ENCODE measurements at regions of chr6 and their contacts with region 1.

Region 1: DNA sequence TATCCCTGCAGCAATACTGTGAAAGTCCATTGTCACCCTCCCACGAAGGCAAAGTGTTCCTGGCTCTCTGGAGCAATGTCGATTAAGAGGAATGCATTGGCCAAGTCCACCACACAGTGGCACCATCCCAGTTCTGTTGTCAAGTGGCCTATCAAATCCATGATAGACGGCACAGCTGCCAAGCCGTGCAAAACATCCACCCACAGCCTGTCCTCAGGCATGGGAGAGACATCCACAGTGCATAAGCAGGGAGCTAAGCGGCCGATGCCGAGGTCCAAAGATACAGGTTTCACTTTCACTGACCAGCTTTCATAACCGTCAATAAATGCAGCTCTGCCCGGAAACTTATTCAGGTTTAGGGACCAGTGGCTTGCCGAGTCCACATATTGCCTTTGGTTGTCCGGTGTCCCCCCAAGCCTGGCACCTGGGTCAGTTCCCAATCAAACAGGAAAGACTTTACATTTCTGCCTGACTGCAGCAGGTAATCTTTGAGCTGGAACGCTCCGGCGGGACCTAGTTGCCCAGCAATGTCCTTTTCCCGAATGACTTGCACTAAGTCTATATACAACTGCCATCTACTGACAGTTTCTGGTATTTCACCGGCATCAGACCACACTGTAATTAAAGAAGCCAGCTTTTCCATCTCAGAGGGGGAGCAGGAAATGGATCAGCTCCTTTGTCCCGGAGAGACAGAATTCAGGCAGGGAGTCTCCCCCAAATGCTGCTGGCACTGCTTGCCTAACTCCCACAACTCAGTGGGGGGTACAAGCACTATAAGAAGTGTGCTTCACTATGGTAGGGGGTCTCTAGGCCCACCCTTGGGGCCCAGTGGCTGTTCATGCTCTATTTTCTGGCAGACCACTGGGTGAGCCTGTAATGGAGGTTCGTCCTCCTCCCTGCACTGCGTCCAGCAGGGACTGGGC is 6.3 kb downstream of the ZKSCAN3 start:
- DNase-seq: peak; percentile 93
- H3K4me3 ChIP-seq: peak overlapping the region; percentile 52 to 84 (median 55)
- H3K27ac ChIP-seq: peak overlapping the region; percentile 60
- H3K4me1 ChIP-seq: peaks cover 36% of the 10 kb centered on the region
- H3K27me3 ChIP-seq: no peaks in the 10 kb centered on the region
- CTCF ChIP-seq: peak; percentile 66 to 73
- POLR2A ChIP-seq: peak; percentile 40

Region 2: DNA sequence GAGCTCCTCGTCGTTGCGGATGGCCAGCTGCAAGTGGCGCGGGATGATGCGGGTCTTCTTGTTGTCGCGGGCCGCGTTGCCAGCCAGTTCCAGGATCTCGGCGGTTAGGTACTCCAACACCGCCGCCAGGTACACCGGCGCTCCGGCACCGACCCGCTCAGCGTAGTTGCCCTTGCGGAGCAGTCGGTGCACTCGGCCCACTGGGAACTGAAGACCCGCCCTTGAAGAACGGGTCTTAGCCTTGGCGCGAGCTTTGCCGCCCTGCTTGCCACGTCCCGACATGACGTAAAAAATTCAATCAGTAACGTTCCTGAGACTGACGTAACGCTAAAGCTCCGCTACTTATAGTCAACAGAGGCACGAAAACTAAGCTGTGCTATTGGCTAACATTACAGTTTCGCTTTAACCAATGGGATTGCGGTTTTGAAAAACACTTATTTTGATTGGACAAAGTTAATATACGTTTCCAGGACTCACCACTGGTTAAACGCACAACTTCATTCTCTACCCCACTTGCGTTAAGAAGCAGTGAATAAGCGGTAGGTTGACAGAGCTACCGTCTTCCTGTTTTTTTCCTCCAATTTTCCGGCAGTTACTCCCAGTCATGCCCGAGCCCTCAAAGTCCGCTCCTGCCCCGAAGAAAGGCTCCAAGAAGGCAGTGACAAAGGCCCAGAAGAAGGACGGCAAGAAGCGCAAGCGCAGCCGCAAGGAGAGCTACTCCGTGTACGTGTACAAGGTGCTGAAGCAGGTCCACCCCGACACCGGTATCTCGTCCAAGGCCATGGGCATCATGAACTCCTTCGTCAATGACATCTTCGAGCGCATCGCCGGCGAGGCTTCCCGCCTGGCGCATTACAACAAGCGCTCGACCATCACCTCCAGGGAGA is 517.7 kb before region 1 on chr6:
- CTCF ChIA-PET with region 1: interaction called, 4 read pairs
- POLR2A ChIA-PET with region 1: no interaction called
- dilution Hi-C with region 1: no loop called
- intact Hi-C with region 1: loop called (anchors 2 kb)
- DNase-seq: peak; percentile 100
- H3K4me3 ChIP-seq: peak overlapping the region; percentile 25 to 86 (median 59)
- H3K27ac ChIP-seq: peak overlapping the region; percentile 95
- H3K4me1 ChIP-seq: peaks cover 14% of the 10 kb centered on the region
- H3K27me3 ChIP-seq: no peaks in the 10 kb centered on the region
- CTCF ChIP-seq: no peak
- POLR2A ChIP-seq: peak; percentile 87

Region 3: DNA sequence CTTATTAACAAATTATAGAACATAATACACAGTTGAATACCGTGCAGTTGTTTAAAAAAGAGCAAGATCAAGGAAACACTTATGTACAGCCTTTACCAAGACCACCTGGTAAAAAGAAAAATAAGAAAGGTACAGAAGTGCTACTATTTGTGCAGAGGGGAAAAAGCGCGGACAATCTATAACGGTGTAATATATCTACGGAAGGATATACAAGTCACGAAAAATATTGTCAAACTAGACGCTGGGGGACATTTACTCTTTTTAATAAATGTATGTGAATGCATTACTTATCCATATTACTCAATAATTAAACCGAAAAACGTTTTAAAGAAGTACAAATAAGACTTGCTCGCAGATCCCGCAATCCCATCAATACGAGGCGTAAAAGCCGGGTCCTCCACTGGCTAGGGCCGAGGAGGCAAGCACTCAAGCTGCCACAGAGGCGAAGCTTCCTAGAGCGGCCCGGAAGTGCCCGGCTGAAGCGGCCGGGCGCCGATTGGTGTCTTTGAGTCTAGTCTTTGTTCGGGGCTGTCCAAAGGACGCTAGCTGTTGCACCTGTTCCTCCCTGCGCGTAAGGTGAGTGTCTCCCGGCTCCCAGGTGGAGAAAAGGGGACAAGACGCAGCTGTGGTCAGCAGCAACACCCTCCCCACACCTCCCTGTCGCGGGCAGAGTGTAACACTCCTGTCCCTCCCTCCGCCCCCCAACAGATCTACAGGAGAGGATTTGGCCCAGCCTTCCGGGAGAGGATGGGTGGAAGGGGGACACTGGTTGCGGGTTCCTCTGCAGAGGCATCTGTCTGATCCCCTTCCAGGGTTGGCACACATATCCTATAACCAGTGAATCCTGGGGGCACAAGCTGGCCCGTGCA is 231.7 kb before region 1 on chr6 and contains the start of gene ZSCAN16:
- CTCF ChIA-PET with region 1: interaction called, 13 read pairs
- POLR2A ChIA-PET with region 1: no interaction called
- dilution Hi-C with region 1: no loop called
- intact Hi-C with region 1: no loop called
- DNase-seq: peak; percentile 84
- H3K4me3 ChIP-seq: peak within 1 kb of the TSS; percentile 58 to 91 (median 77)
- H3K27ac ChIP-seq: peak within 1 kb of the TSS; percentile 46
- H3K4me1 ChIP-seq: peaks cover 11% of the 10 kb centered on the region
- H3K27me3 ChIP-seq: no peaks in the 10 kb centered on the region
- CTCF ChIP-seq: no peak
- POLR2A ChIP-seq: peak; percentile 92
- total RNA-seq, gene ZSCAN16: 7.7 and 8.9 TPM in 2 replicates

Region 4: DNA sequence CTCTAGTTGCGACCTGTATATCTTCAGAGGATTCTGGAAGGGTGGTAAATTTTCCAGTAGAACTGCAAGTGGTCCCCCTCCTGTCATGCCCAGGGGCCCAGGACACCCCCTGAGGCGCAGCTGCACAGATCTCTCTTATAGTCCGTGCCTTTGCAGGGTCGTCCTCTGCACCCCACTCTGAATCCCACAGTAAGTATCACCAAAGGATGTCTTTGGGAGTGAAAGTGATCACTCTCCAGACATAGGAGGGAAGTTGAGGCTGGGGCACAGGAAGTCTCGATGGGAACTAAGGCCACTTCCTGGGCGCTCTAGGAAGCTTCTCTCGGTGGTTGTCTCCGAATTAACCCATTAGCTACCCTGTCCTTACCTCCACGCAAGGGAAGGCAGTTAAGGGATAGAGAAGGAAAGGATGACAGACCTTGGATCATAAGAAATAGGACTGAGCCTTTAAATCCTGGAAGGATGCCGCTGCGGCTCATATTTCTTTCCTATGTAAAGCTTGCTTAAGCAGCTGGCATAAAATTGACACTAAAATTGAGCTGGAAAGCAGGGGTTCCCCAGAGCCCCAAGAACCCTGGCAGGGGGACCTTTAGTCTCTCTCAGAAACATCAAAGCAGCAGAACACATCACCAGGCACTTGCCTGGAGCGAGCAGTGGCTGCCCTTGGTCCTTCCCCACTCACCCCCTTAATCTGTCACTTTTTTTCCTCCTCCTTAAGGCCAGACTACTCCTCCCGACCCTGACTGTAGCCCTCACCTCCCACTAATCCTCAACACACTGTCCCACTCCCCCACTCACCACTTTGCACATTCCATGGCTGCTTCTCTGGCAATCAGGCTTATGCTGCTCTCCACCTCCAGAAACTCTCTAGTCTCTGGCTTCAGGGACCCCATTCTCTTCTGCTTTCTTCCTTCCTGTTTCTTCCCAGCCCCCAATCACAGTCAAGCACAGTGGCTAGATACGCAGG is 103.7 kb before region 1 on chr6 and contains the start of gene ZKSCAN4:
- CTCF ChIA-PET with region 1: interaction called, 22 read pairs
- POLR2A ChIA-PET with region 1: no interaction called
- dilution Hi-C with region 1: no loop called
- intact Hi-C with region 1: loop called (anchors 1 kb)
- DNase-seq: peak; percentile 83
- H3K4me3 ChIP-seq: peak within 1 kb of the TSS; percentile 85 to 89 (median 85)
- H3K27ac ChIP-seq: no peak within 1 kb of the TSS
- H3K4me1 ChIP-seq: peaks cover 12% of the 10 kb centered on the region
- H3K27me3 ChIP-seq: no peaks in the 10 kb centered on the region
- CTCF ChIP-seq: no peak
- POLR2A ChIP-seq: no peak
- total RNA-seq, gene ZKSCAN4: 3.6 and 4.1 TPM in 2 replicates

Region 5: DNA sequence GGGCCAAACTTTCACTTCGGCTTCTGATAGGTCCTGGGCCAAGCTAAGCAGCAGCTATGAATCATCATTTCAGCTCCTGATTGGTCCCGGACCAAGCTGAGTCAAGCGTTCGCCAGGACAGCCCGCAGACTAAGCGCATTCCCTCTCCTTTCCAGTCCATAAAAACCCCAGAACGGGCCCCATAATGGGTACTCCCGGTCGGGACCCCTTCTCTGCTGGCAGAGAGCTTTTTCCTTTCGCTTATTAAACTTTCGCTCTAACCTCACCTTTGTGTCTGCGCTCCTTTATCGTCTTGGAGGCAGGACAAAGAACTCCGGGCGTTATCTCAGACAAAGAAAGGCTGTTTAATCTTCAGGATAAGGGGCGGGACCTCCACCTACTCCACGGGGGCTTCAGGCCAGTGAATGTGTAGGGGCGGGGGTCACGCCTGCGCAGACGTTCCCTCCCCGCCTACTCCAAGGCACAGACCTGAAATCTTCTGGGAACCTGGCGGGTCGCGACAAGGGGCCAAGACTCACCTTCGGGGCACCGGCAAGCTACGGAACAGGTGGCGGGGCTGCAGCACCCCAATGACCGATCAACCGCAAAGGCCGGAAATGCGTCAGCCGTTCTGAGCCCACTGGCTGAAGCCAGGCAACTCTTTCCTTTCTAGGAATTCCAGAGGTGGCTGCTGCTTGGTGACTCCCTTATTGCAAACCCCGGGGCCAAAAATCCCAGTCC is 20.3 kb before region 1 on chr6 and contains the start of gene ZSCAN31:
- CTCF ChIA-PET with region 1: interaction called, 33 read pairs
- POLR2A ChIA-PET with region 1: interaction called, 15 read pairs
- dilution Hi-C with region 1: no loop called
- intact Hi-C with region 1: loop called (anchors 1 kb)
- DNase-seq: peak; percentile 98
- H3K4me3 ChIP-seq: peak within 1 kb of the TSS; percentile 70 to 79 (median 73)
- H3K27ac ChIP-seq: peak within 1 kb of the TSS; percentile 96
- H3K4me1 ChIP-seq: peaks cover 15% of the 10 kb centered on the region
- H3K27me3 ChIP-seq: no peaks in the 10 kb centered on the region
- CTCF ChIP-seq: no peak
- POLR2A ChIP-seq: peak; percentile 94
- total RNA-seq, gene ZSCAN31: 19.5 and 23.0 TPM in 2 replicates

Region 6: GRCh38 chr6:28399350-28400121 is 43.5 kb after region 1 on chr6 and contains the start of gene ZSCAN12:
- CTCF ChIA-PET with region 1: no interaction called
- POLR2A ChIA-PET with region 1: no interaction called
- dilution Hi-C with region 1: no loop called
- intact Hi-C with region 1: loop called (anchors 2 kb)
- DNase-seq: peak; percentile 72
- H3K4me3 ChIP-seq: peak within 1 kb of the TSS; percentile 58 to 95 (median 94)
- H3K27ac ChIP-seq: peak within 1 kb of the TSS; percentile 60
- H3K4me1 ChIP-seq: peaks cover 16% of the 10 kb centered on the region
- H3K27me3 ChIP-seq: peaks cover 9 to 18% of the 10 kb centered on the region in 2 experiments
- CTCF ChIP-seq: peak; percentile 39 to 71
- POLR2A ChIP-seq: peak; percentile 80
- total RNA-seq, gene ZSCAN12: 4.2 and 4.4 TPM in 2 replicates